Endothelial cell of umbilical vein (primary cell): ENCODE measurements at regions of chr1 and their contacts with region 1.

Region 1: DNA sequence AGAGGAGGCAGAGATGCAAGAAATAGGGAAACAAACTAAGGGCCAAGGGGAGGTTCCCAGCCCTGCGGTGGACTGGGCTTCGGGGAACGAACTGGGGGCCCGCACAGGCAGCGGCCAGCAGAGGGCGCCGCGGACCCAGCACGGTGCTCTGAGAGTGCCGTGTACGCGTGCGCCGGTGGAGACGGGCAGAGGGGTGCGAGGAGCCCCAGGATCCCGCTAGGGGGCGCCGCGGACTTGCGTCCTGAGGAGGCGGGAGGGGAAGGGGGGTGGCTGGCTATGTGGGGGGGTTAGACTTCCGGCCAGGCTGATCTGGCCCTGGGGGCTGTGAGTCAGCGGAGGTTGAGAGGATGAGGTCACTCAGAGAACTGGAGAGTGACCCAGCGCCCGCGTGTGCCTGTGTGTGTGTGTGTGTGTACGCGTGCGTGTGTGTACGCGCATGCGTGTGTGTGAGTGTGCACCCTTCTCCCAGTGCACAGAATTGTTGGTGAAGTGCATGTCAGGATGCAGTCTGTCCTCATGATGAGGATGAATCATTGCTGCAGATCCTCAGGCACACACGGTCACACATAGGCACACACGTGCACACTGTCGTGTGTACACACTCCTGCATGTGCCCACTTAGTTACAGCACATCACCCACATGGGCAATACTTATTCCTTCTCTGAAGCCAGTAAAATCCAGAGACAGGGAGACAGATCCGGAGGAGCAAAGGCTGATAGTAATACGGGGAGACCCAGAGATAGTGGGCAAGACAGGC is 17.0 kb downstream of the NES start:
- DNase-seq: peak; percentile 96
- H3K4me3 ChIP-seq: peak overlapping the region in 1 of 3 experiments; percentile 59
- H3K27ac ChIP-seq: peak overlapping the region; percentile 85
- H3K4me1 ChIP-seq: peaks cover 67% of the 10 kb centered on the region
- H3K27me3 ChIP-seq: peaks cover 3 to 9% of the 10 kb centered on the region in 2 experiments
- CTCF ChIP-seq: peak; percentile 100
- POLR2A ChIP-seq: peak; percentile 83

Region 2: GRCh38 chr1:156508888-156509234 is 151.3 kb before region 1 on chr1:
- CTCF ChIA-PET with region 1: no interaction called
- POLR2A ChIA-PET with region 1: no interaction called
- dilution Hi-C with region 1: no loop called
- intact Hi-C with region 1: no loop called
- DNase-seq: no peak
- H3K4me3 ChIP-seq: no peak overlapping the region
- H3K27ac ChIP-seq: no peak overlapping the region
- H3K4me1 ChIP-seq: peaks cover 13% of the 10 kb centered on the region
- H3K27me3 ChIP-seq: peaks cover 0 to 3% of the 10 kb centered on the region in 2 experiments
- CTCF ChIP-seq: no peak
- POLR2A ChIP-seq: no peak

Region 3: DNA sequence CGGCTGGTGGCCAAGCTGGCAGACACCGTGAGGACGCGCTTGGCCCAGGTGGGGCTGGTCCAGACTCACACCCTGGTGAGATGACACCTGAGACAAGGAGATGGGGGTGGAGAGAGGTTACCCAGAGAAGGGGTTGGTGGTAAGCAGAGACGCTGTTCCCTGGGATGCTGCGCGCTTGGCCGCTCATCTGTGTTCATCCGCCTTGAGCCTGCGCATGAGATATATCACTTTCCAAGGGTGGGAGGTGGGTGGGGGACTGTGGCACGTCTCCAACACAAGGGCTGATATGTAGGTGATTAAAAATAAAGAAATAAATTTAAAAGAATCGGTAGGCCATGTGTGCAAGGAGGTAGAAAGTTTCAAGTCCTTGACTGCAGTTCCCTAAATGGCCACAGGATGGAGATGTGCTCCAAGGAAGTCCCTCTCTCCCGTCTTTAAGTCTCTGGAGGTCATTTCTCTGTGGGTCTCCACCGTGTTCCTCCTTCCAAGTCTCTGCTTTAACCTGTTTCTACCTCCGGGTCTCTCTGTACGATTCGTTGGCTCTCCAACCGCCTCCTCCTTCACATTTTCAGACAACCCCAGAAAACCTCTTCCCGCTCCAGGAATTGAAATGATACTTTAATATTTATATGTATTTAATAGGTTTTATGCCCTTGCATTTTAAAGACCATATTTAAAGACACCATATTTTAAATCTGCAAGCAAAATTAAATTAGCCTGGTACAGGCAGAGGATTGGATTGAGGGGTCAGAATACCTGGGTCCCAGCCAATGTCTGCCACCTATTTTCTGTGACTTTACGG is 76.2 kb before region 1 on chr1:
- CTCF ChIA-PET with region 1: no interaction called
- POLR2A ChIA-PET with region 1: no interaction called
- dilution Hi-C with region 1: no loop called
- intact Hi-C with region 1: loop called (anchors 1 kb)
- DNase-seq: peak; percentile 82
- H3K4me3 ChIP-seq: no peak overlapping the region
- H3K27ac ChIP-seq: no peak overlapping the region
- H3K4me1 ChIP-seq: no peaks in the 10 kb centered on the region
- H3K27me3 ChIP-seq: no peaks in the 10 kb centered on the region
- CTCF ChIP-seq: peak; percentile 68 to 90
- POLR2A ChIP-seq: no peak

Region 4: DNA sequence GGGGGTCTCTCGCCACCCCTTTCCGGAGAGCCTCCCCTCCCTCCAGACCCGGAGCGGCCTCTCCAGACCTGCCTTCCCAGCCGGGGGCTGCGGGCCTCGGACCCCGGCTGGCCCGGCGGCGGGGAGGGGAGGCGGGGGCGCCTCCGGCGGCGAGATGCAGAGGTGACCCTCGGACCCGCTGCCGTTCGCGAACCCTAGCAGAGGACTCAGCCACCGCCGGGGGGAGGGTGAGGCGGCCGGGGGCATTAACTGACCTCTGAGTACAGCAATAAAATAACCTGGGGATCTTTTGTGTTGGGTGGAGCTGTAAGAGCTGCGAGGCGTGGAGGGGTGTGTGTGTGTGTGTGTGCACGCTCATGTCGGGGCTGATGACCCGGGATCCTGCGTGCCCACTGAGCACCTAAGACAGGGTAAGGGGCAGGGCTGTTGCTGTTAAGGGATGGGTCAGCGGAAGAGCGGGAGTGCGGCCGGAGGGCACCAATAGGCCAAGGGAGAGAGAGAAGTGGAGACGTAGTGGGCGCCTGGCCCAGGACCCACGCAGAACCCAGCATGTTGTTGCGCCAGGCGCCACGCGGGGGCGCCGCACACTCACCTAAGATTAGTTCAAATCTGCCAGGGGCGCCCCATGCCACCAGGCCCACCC is 34.6 kb before region 1 on chr1:
- CTCF ChIA-PET with region 1: interaction called, 237 read pairs
- POLR2A ChIA-PET with region 1: interaction called, 8 read pairs
- dilution Hi-C with region 1: no loop called
- intact Hi-C with region 1: loop called (anchors 1 kb)
- DNase-seq: peak; percentile 47
- H3K4me3 ChIP-seq: no peak overlapping the region
- H3K27ac ChIP-seq: no peak overlapping the region
- H3K4me1 ChIP-seq: peaks cover 10% of the 10 kb centered on the region
- H3K27me3 ChIP-seq: peaks cover 36% of the 10 kb centered on the region in 2 experiments
- CTCF ChIP-seq: peak; percentile 69 to 90
- POLR2A ChIP-seq: no peak

Region 5: DNA sequence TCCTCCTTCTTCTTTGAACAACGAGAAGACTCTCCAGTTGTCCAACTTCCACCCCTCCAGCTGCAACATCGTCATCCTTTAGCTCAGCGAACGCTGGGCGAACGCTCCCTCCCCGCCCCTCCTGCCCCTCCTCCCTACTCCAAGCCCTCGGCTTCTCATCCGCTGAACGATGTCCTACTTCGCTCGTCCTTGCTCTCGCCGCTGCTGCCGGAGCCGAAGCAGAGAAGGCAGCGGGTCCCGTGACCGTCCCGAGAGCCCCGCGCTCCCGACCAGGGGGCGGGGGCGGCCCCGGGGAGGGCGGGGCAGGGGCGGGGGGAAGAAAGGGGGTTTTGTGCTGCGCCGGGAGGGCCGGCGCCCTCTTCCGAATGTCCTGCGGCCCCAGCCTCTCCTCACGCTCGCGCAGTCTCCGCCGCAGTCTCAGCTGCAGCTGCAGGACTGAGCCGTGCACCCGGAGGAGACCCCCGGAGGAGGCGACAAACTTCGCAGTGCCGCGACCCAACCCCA is 18.4 kb before region 1 on chr1 and contains the start of gene BCAN:
- CTCF ChIA-PET with region 1: interaction called, 10 read pairs
- POLR2A ChIA-PET with region 1: no interaction called
- dilution Hi-C with region 1: no loop called
- intact Hi-C with region 1: no loop called
- DNase-seq: no peak
- H3K4me3 ChIP-seq: no peak within 1 kb of the TSS
- H3K27ac ChIP-seq: no peak within 1 kb of the TSS
- H3K4me1 ChIP-seq: no peaks in the 10 kb centered on the region
- H3K27me3 ChIP-seq: peaks cover 78 to 88% of the 10 kb centered on the region in 2 experiments
- CTCF ChIP-seq: no peak
- POLR2A ChIP-seq: no peak
- total RNA-seq, gene BCAN: not detected in 2 replicates

Region 6: DNA sequence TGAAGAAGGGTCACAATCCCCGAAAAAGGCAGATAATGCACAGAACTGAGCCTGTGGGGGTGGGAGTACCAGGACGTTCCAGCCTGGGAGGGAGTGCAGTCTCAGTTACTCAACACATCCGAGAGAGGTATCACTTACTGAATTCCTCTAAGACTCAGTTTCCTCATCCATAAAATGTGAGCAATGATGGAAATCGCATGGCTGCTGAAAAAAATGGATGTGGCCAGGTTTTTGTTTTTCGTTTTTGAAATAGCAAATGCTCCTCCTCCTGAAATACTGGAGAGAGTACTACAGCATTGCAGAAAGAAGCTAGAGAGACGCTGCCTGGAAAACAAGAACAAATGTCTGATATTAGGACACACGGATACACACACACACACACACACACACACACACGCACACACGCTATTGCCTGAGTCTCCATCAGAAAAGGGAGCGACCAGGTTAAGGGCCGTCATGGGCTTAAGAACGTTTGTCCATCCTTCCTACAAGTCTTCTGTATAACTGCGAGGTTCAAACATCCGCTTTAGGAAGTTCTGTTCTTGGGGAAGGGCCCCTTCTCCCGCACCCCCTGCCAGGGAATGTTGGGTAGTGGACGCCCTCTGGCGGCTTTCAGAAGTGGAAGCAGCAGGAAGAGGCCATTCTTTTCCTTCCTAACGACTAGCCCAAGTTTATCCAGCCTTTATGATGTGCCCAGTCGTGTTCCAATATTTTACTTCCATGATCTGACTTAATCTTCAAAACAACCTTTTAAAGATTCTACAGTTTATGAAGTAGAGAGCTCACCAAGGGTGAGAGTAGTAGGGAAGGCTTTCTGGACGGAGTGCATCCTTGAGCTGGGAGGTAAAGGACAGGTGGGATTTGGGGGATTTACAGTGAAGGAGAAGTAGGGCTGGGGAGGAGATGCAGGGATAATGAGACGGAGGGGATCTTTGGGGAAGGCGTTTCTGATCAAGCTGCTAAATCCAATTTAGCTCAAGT is 17.7 kb after region 1 on chr1:
- CTCF ChIA-PET with region 1: interaction called, 221 read pairs
- POLR2A ChIA-PET with region 1: interaction called, 32 read pairs
- dilution Hi-C with region 1: no loop called
- intact Hi-C with region 1: loop called (anchors 1 kb)
- DNase-seq: peak; percentile 83
- H3K4me3 ChIP-seq: peak overlapping the region; percentile 19 to 81 (median 50)
- H3K27ac ChIP-seq: peak overlapping the region; percentile 19
- H3K4me1 ChIP-seq: peaks cover 36% of the 10 kb centered on the region
- H3K27me3 ChIP-seq: peaks cover 2 to 5% of the 10 kb centered on the region in 2 experiments
- CTCF ChIP-seq: peak; percentile 91
- POLR2A ChIP-seq: no peak

Region 7: GRCh38 chr1:156705918-156706656 is 45.9 kb after region 1 on chr1:
- CTCF ChIA-PET with region 1: interaction called, 9 read pairs
- POLR2A ChIA-PET with region 1: no interaction called
- dilution Hi-C with region 1: no loop called
- intact Hi-C with region 1: loop called (anchors 1 kb)
- DNase-seq: peak; percentile 57
- H3K4me3 ChIP-seq: peak overlapping the region in 1 of 3 experiments; percentile 4
- H3K27ac ChIP-seq: no peak overlapping the region
- H3K4me1 ChIP-seq: peaks cover 19% of the 10 kb centered on the region
- H3K27me3 ChIP-seq: peaks cover 0 to 3% of the 10 kb centered on the region in 2 experiments
- CTCF ChIP-seq: peak; percentile 76 to 87
- POLR2A ChIP-seq: no peak